Tibial artery (tissue), 4 donors: ENCODE measurements at regions of chr6 and their contacts with region 1.

Region 1: GRCh38 chr6:31834434-31835198 is 7.1 kb downstream of the HSPA1B start:
- DNase-seq: peak; percentile 86 to 93
- H3K4me3 ChIP-seq: peak overlapping the region; percentile 70 to 88
- H3K27ac ChIP-seq: peak overlapping the region; percentile 87 to 88
- H3K4me1 ChIP-seq: peaks cover 0 to 58% (median 52%) of the 10 kb centered on the region in 4 donors
- H3K27me3 ChIP-seq: no peaks in the 10 kb centered on the region
- CTCF ChIP-seq: no peak

Region 2: DNA sequence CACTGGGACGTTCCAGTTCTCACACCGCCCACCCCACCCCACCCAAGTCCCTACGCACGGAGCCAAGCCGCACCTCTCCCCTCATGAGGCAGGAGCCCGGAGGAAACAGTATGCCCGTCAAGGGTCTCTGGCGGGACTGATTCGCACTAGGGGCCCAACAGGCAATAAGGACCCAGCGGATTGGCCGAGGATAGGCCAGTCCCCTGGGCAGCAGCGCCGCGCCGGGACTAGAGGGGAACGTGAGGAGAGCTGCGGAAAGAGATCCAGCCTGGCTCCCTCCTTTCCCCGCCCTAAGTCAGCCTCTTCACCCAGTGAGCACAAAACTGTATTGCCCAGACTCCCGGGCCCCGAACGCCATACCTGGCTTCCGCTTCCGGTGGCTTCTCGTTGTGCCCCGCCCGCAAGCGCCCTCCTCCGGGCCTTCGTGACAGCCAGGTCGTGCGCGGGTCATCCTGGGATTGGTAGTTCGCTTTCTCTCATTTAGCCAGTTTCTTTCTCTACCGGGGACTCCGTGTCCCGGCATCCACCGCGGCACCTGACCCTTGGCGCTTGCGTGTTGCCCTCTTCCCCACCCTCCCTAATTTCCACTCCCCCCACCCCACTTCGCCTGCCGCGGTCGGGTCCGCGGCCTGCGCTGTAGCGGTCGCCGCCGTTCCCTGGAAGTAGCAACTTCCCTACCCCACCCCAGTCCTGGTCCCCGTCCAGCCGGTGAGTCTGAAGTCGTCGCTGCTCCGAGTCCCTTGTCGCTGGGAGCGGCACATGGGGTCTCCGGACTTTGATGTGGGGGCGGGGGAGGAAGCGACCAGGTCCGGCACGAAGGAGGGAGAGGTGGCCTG is 168.9 kb before region 1 on chr6 and contains the start of gene CSNK2B:
- intact Hi-C with region 1: loop called (anchors 5 kb)
- DNase-seq: peak; percentile 99 to 100
- H3K4me3 ChIP-seq: peak within 1 kb of the TSS; percentile 77 to 88
- H3K27ac ChIP-seq: peak within 1 kb of the TSS; percentile 93 to 94
- H3K4me1 ChIP-seq: peaks cover 0 to 64% (median 47%) of the 10 kb centered on the region in 4 donors
- H3K27me3 ChIP-seq: no peaks in the 10 kb centered on the region
- CTCF ChIP-seq: no peak

Region 3: DNA sequence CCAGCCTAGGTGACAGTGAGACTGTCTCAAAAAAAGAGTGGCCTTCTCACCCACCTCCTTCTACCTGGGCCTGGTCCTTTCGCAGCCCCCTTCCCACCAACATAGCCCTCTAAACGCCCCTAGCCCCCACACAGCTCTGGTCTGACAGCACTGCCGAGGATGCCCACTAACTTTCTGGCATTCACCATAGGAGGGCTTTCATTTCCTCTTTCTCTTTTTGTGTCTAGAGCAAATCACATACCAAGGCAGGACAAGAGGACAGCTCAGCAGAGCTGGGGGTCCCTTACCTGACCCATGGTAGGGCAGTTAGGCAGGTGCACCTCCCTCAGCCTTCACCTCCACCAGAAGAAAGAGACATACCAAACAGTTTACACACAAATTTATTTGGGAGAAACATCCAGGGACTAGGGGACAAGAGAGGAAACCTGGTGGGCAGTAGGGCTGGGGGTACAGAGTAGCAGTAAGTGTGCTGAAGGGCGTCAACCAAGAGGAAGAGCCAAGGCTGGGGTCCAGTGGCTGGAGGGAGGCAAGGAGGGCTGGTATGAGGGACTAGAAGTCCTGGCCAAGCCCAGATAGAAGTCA is 158.2 kb before region 1 on chr6:
- intact Hi-C with region 1: loop called (anchors 5 kb)
- DNase-seq: no peak
- H3K4me3 ChIP-seq: no peak overlapping the region
- H3K27ac ChIP-seq: no peak overlapping the region
- H3K4me1 ChIP-seq: peaks cover 0 to 13% (median 10%) of the 10 kb centered on the region in 4 donors
- H3K27me3 ChIP-seq: no peaks in the 10 kb centered on the region
- CTCF ChIP-seq: no peak

Region 4: GRCh38 chr6:31729515-31729978 is 105.1 kb before region 1 on chr6:
- intact Hi-C with region 1: loop called (anchors 10 kb)
- DNase-seq: peak; percentile 95 to 98
- H3K4me3 ChIP-seq: peak overlapping the region; percentile 69 to 78
- H3K27ac ChIP-seq: peak overlapping the region; percentile 88 to 94
- H3K4me1 ChIP-seq: peaks cover 0 to 45% (median 34%) of the 10 kb centered on the region in 4 donors
- H3K27me3 ChIP-seq: no peaks in the 10 kb centered on the region
- CTCF ChIP-seq: no peak